ENCODE measurements at regions of chr1 and their contacts with region 1.

Region 1: GRCh38 chr1:108125312-108126138 is 74.6 kb downstream of the SLC25A24 start:
- DNase-seq: peak; percentile 83
- H3K4me3 ChIP-seq: no peak overlapping the region
- H3K27ac ChIP-seq: no peak overlapping the region
- H3K4me1 ChIP-seq: peaks cover 7 to 14% (median 10%) of the 10 kb centered on the region in 6 donors
- H3K27me3 ChIP-seq: no peaks in the 10 kb centered on the region
- CTCF ChIP-seq: peak; percentile 82 to 97 (median 93)
- POLR2A ChIP-seq: no peak

Region 2: DNA sequence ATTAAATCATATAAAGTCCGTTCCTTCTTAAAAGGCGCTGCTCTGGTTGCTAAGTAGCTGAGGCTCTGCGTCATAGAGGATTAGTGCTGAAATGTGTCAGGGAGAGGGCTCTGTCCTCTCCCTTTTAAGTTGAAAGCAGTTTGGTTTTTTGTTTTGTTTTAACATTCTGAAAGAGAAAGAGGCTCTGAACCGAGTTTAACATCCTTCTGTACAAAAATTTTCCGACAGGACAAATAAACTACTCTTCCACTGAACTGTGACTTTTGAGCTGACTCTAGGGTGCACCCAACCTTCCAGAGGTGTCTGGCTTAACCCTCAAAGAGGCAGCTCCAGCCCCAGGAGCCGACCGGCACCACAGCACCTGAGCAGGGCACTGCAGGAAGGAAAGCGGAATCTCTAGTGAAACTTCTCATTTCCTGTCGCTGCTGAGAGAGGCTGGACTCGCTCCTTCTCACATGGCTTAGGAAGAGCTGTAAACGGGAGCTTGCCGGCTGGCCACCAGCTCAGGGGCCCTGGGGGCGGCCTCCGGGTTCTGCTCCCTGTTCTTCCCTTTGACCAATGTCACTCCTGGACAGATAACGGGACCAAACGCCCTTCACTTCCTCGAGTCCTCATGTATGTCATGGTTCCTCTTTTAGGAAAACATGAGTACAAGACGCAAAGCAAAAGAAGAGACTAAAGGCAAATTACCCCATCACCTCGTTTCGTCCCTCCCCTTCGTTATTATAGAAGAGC is 161.8 kb before region 1 on chr1:
- intact Hi-C with region 1: loop called (anchors 10 kb)
- DNase-seq: peak; percentile 89
- H3K4me3 ChIP-seq: peak overlapping the region; percentile 61 to 99 (median 87)
- H3K27ac ChIP-seq: peak overlapping the region; percentile 85 to 96 (median 93)
- H3K4me1 ChIP-seq: peaks cover 17 to 70% (median 32%) of the 10 kb centered on the region in 6 donors
- H3K27me3 ChIP-seq: no peaks in the 10 kb centered on the region
- CTCF ChIP-seq: no peak
- POLR2A ChIP-seq: peak in 1 of 3 donors; percentile 6

Region 3: GRCh38 chr1:108016451-108016920 is 109.0 kb before region 1 on chr1:
- intact Hi-C with region 1: no loop called
- DNase-seq: no peak
- H3K4me3 ChIP-seq: no peak overlapping the region
- H3K27ac ChIP-seq: no peak overlapping the region
- H3K4me1 ChIP-seq: peaks cover 0 to 5% (median 0%) of the 10 kb centered on the region in 6 donors
- H3K27me3 ChIP-seq: no peaks in the 10 kb centered on the region
- CTCF ChIP-seq: no peak
- POLR2A ChIP-seq: no peak

Measured in spleen (tissue), 13 donors.